K562 (cell line): ENCODE measurements at regions of chr20 and their contacts with region 1.

Region 1: GRCh38 chr20:42576191-42576590 is 613.5 kb downstream of the PTPRT start:
- DNase-seq: no peak
- ATAC-seq: no peak
- H3K4me3 ChIP-seq: no peak overlapping the region
- H3K27ac ChIP-seq: no peak overlapping the region
- H3K4me1 ChIP-seq: no peaks in the 10 kb centered on the region
- H3K27me3 ChIP-seq: no peaks in the 10 kb centered on the region
- CTCF ChIP-seq: no peak
- EP300 ChIP-seq: no peak
- POLR2A ChIP-seq: no peak
- RAD21 ChIP-seq: no peak

Region 2: DNA sequence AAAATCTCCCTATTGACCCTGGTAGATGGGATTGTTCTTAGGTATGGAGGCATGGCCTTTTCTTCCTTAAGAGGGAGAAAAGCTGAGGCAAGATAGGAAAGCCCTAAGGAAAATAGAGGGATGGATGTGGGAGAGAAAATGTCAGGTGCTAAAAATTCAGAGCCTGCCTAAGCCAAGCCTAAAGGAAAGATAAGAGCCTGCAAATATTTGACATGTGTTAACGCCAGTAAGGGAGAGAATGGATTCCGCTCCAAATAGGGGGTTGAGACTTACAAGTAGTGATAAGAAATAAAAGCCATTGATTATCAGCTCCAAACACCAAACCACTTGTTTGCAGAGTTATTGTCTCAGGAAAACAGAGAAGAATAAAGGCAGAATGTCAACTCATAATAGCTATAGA is 79.9 kb after region 1 on chr20:
- CTCF ChIA-PET with region 1: no interaction called
- POLR2A ChIA-PET with region 1: no interaction called
- in situ Hi-C with region 1: loop called (anchors 10 kb)
- intact Hi-C with region 1: no loop called
- DNase-seq: no peak
- ATAC-seq: no peak
- H3K4me3 ChIP-seq: no peak overlapping the region
- H3K27ac ChIP-seq: no peak overlapping the region
- H3K4me1 ChIP-seq: no peaks in the 10 kb centered on the region
- H3K27me3 ChIP-seq: no peaks in the 10 kb centered on the region
- CTCF ChIP-seq: no peak
- EP300 ChIP-seq: no peak
- POLR2A ChIP-seq: no peak
- RAD21 ChIP-seq: no peak

Region 3: DNA sequence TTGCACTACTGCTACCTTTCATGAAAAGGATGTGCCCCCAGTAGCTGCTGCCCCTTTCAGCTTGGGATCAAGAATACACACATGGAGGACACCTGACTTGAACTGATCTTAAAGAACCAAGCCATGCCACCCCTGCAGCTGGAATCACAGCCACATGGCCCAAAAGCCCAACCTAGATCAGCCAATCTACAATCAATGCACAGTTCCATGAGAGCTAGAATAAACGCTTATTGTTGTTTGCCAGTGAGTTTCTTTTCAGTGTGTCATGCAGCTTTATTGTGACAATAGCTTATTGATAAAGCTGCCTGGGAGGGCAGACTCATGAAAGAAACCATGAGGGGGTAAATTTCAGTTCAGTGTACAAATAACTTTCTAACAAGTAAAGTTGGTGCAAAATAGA is 215.9 kb after region 1 on chr20:
- CTCF ChIA-PET with region 1: no interaction called
- POLR2A ChIA-PET with region 1: no interaction called
- in situ Hi-C with region 1: no loop called
- intact Hi-C with region 1: no loop called
- DNase-seq: no peak
- ATAC-seq: no peak
- H3K4me3 ChIP-seq: no peak overlapping the region
- H3K27ac ChIP-seq: no peak overlapping the region
- H3K4me1 ChIP-seq: no peaks in the 10 kb centered on the region
- H3K27me3 ChIP-seq: 0 out of 5 replicates have a peak, but pooled peaks cover 0 to 4% of the 10 kb centered on the region in 2 experiments
- CTCF ChIP-seq: no peak
- EP300 ChIP-seq: no peak
- POLR2A ChIP-seq: no peak
- RAD21 ChIP-seq: no peak

Region 4: GRCh38 chr20:43068482-43068881 is 492.3 kb after region 1 on chr20:
- CTCF ChIA-PET with region 1: no interaction called
- POLR2A ChIA-PET with region 1: no interaction called
- in situ Hi-C with region 1: no loop called
- intact Hi-C with region 1: no loop called
- DNase-seq: no peak
- ATAC-seq: no peak
- H3K4me3 ChIP-seq: no peak overlapping the region
- H3K27ac ChIP-seq: no peak overlapping the region
- H3K4me1 ChIP-seq: no peaks in the 10 kb centered on the region
- H3K27me3 ChIP-seq: no peaks in the 10 kb centered on the region
- CTCF ChIP-seq: no peak
- EP300 ChIP-seq: no peak
- POLR2A ChIP-seq: no peak
- RAD21 ChIP-seq: no peak